ENCODE measurements at regions of chr14 and their contacts with region 1.

Region 1: GRCh38 chr14:100645192-100645990 is 58.2 kb upstream of the BEGAIN start:
- DNase-seq: peak; percentile 89
- H3K4me3 Mint-ChIP-seq: peak overlapping the region; percentile 13
- H3K27ac Mint-ChIP-seq: peak overlapping the region; percentile 72
- H3K4me1 Mint-ChIP-seq: peaks cover 56% of the 10 kb centered on the region
- H3K27me3 Mint-ChIP-seq: peaks cover 2% of the 10 kb centered on the region

Region 2: DNA sequence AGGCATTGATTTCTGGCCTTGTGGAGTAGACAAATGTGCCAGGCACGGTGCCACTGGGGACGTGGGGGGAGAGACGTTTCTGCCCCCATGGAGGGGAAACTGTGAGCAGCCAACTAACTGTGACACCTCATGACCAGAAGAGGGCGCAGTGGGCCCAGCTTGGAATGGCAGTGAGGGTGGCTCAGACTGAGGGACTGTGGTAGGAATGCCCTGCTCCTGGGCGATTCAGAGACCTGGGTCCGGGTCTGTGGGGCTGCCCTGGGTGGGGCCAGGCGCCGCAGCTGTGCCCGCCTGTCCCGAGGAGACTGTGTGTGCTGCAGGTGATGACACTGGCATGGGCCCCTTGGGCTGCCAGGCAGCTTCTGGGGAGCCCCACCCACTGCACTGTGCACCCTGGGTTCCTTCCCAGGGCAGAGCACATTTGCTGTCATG is 261.6 kb before region 1 on chr14:
- CTCF ChIA-PET with region 1: interaction called, 228 read pairs
- POLR2A ChIA-PET with region 1: interaction called, 23 read pairs
- DNase-seq: peak; percentile 74
- H3K4me3 Mint-ChIP-seq: no peak overlapping the region
- H3K27ac Mint-ChIP-seq: no peak overlapping the region
- H3K4me1 Mint-ChIP-seq: peaks cover 17% of the 10 kb centered on the region
- H3K27me3 Mint-ChIP-seq: no peaks in the 10 kb centered on the region

Region 3: GRCh38 chr14:100419856-100420255 is 225.5 kb before region 1 on chr14:
- CTCF ChIA-PET with region 1: interaction called, 11 read pairs
- POLR2A ChIA-PET with region 1: no interaction called
- DNase-seq: no peak
- H3K4me3 Mint-ChIP-seq: no peak overlapping the region
- H3K27ac Mint-ChIP-seq: no peak overlapping the region
- H3K4me1 Mint-ChIP-seq: peaks cover 6% of the 10 kb centered on the region
- H3K27me3 Mint-ChIP-seq: no peaks in the 10 kb centered on the region

Region 4: GRCh38 chr14:100504372-100505078 is 140.9 kb before region 1 on chr14:
- CTCF ChIA-PET with region 1: no interaction called
- POLR2A ChIA-PET with region 1: no interaction called
- DNase-seq: no peak
- H3K4me3 Mint-ChIP-seq: no peak overlapping the region
- H3K27ac Mint-ChIP-seq: no peak overlapping the region
- H3K4me1 Mint-ChIP-seq: peaks cover 2% of the 10 kb centered on the region
- H3K27me3 Mint-ChIP-seq: peaks cover 2% of the 10 kb centered on the region

Region 5: DNA sequence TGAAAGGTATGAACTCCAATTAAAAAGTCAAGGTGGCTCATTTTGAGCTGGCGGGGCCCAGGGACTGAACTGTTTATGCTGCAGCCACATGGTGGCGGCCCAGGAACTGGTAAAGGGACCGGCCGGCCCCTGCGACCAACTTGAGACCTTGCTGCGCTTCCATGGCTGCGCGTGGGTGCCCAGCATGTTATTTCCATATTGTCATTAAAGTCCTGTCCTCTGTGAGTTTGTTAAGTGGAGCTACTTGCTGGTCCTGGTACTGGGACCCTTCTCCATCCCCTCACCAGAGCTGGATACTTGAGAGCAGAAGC is 120.5 kb before region 1 on chr14:
- CTCF ChIA-PET with region 1: interaction called, 20 read pairs
- POLR2A ChIA-PET with region 1: interaction called, 3 read pairs
- DNase-seq: peak; percentile 48
- H3K4me3 Mint-ChIP-seq: no peak overlapping the region
- H3K27ac Mint-ChIP-seq: no peak overlapping the region
- H3K4me1 Mint-ChIP-seq: no peaks in the 10 kb centered on the region
- H3K27me3 Mint-ChIP-seq: no peaks in the 10 kb centered on the region

Region 6: GRCh38 chr14:100546051-100546443 is 99.3 kb before region 1 on chr14:
- CTCF ChIA-PET with region 1: interaction called, 17 read pairs
- POLR2A ChIA-PET with region 1: interaction called, 14 read pairs
- DNase-seq: no peak
- H3K4me3 Mint-ChIP-seq: no peak overlapping the region
- H3K27ac Mint-ChIP-seq: peak overlapping the region; percentile 31
- H3K4me1 Mint-ChIP-seq: peaks cover 38% of the 10 kb centered on the region
- H3K27me3 Mint-ChIP-seq: no peaks in the 10 kb centered on the region

Region 7: GRCh38 chr14:100629696-100630095 is 15.7 kb before region 1 on chr14:
- CTCF ChIA-PET with region 1: interaction called, 16 read pairs
- POLR2A ChIA-PET with region 1: interaction called, 4 read pairs
- DNase-seq: no peak
- H3K4me3 Mint-ChIP-seq: no peak overlapping the region
- H3K27ac Mint-ChIP-seq: no peak overlapping the region
- H3K4me1 Mint-ChIP-seq: peaks cover 3% of the 10 kb centered on the region
- H3K27me3 Mint-ChIP-seq: peaks cover 47% of the 10 kb centered on the region

Region 8: DNA sequence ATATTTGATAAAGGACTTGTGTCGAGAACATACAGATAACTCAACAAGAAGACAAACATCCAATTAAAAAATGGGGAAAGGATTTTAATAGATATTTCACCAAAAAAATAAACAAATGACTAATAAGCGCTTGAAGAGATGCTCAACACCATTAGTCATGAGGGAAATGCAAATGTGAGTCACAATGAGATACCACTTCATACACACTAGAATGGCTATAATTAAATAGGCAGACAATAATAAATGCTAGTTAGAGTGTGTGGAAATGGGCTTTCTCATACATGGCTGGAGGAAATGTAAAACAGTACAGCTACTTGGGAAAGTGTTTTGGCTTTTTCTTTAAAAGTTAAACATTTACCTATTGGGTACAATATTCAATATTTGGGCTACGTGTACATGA is 116.1 kb after region 1 on chr14:
- CTCF ChIA-PET with region 1: no interaction called
- POLR2A ChIA-PET with region 1: no interaction called
- DNase-seq: no peak
- H3K4me3 Mint-ChIP-seq: no peak overlapping the region
- H3K27ac Mint-ChIP-seq: no peak overlapping the region
- H3K4me1 Mint-ChIP-seq: no peaks in the 10 kb centered on the region
- H3K27me3 Mint-ChIP-seq: peaks cover 13% of the 10 kb centered on the region